ENCODE measurements at regions of chr9 and their contacts with region 1.

Region 1: GRCh38 chr9:2014696-2015580 is at the start of gene SMARCA2:
- DNase-seq: peak; percentile 94 to 99 (median 97)
- ATAC-seq: peak; percentile 77
- H3K4me3 ChIP-seq: peak within 1 kb of the TSS; percentile 84
- H3K4me3 Mint-ChIP-seq: peak within 1 kb of the TSS; percentile 100
- H3K27ac ChIP-seq: peak within 1 kb of the TSS; percentile 87 to 91
- H3K27ac Mint-ChIP-seq: peak within 1 kb of the TSS; percentile 99
- H3K4me1 ChIP-seq: peaks cover 12% of the 10 kb centered on the region
- H3K4me1 Mint-ChIP-seq: peaks cover 38% of the 10 kb centered on the region
- H3K27me3 ChIP-seq: no peaks in the 10 kb centered on the region
- H3K27me3 Mint-ChIP-seq: peaks cover 9% of the 10 kb centered on the region
- CTCF ChIP-seq: no peak
- total RNA-seq, gene SMARCA2: 268 to 272 TPM

Region 2: GRCh38 chr9:1303932-1304331 is 711.0 kb before region 1 on chr9:
- CTCF ChIA-PET with region 1: no interaction called
- POLR2A ChIA-PET with region 1: no interaction called
- intact Hi-C with region 1: no loop called
- DNase-seq: no peak
- ATAC-seq: no peak
- H3K4me3 ChIP-seq: no peak overlapping the region
- H3K4me3 Mint-ChIP-seq: no peak overlapping the region
- H3K27ac ChIP-seq: no peak overlapping the region
- H3K27ac Mint-ChIP-seq: no peak overlapping the region
- H3K4me1 ChIP-seq: no peaks in the 10 kb centered on the region
- H3K4me1 Mint-ChIP-seq: no peaks in the 10 kb centered on the region
- H3K27me3 ChIP-seq: no peaks in the 10 kb centered on the region
- H3K27me3 Mint-ChIP-seq: no peaks in the 10 kb centered on the region
- CTCF ChIP-seq: no peak

Region 3: GRCh38 chr9:2000314-2000713 is 14.6 kb before region 1 on chr9:
- CTCF ChIA-PET with region 1: no interaction called
- POLR2A ChIA-PET with region 1: interaction called, 11 read pairs
- intact Hi-C with region 1: no loop called
- DNase-seq: no peak
- ATAC-seq: no peak
- H3K4me3 ChIP-seq: no peak overlapping the region
- H3K4me3 Mint-ChIP-seq: no peak overlapping the region
- H3K27ac ChIP-seq: no peak overlapping the region
- H3K27ac Mint-ChIP-seq: no peak overlapping the region
- H3K4me1 ChIP-seq: no peaks in the 10 kb centered on the region
- H3K4me1 Mint-ChIP-seq: peaks cover 9% of the 10 kb centered on the region
- H3K27me3 ChIP-seq: no peaks in the 10 kb centered on the region
- H3K27me3 Mint-ChIP-seq: no peaks in the 10 kb centered on the region
- CTCF ChIP-seq: no peak

Region 4: DNA sequence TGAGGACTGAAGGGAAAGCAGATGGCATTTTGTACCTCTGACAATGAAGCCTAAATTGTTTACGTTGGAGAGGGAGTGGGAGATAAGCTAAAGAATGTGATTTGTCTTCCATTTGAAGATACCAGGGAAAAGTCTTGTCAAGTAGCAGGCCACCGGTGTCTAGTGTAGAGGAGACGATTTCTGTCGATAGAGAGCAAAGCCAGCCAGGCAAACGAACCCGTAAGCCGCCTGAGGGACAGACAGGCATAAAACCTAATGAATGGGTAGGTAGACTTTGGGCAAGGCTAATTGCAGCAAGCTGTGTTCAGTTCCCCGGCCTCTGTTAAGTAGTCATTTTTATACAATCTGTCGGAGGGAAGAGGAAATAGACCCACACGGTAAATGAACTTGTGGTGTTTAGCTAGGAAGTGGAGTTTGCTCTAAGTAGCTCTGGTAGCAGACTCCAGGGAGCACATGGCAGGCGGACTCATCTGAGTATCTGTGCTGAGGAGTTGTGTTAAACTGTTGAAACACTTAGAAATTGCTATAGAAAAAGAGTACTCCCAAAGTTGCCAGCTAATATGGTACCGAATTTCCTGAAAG is 29.0 kb after region 1 on chr9:
- CTCF ChIA-PET with region 1: interaction called, 4 read pairs
- POLR2A ChIA-PET with region 1: interaction called, 14 read pairs
- intact Hi-C with region 1: no loop called
- DNase-seq: no peak
- ATAC-seq: peak; percentile 21
- H3K4me3 ChIP-seq: no peak overlapping the region
- H3K4me3 Mint-ChIP-seq: peak overlapping the region; percentile 2
- H3K27ac ChIP-seq: no peak overlapping the region
- H3K27ac Mint-ChIP-seq: peak overlapping the region; percentile 77
- H3K4me1 ChIP-seq: peaks cover 9% of the 10 kb centered on the region
- H3K4me1 Mint-ChIP-seq: peaks cover 64% of the 10 kb centered on the region
- H3K27me3 ChIP-seq: no peaks in the 10 kb centered on the region
- H3K27me3 Mint-ChIP-seq: no peaks in the 10 kb centered on the region
- CTCF ChIP-seq: no peak

Region 5: DNA sequence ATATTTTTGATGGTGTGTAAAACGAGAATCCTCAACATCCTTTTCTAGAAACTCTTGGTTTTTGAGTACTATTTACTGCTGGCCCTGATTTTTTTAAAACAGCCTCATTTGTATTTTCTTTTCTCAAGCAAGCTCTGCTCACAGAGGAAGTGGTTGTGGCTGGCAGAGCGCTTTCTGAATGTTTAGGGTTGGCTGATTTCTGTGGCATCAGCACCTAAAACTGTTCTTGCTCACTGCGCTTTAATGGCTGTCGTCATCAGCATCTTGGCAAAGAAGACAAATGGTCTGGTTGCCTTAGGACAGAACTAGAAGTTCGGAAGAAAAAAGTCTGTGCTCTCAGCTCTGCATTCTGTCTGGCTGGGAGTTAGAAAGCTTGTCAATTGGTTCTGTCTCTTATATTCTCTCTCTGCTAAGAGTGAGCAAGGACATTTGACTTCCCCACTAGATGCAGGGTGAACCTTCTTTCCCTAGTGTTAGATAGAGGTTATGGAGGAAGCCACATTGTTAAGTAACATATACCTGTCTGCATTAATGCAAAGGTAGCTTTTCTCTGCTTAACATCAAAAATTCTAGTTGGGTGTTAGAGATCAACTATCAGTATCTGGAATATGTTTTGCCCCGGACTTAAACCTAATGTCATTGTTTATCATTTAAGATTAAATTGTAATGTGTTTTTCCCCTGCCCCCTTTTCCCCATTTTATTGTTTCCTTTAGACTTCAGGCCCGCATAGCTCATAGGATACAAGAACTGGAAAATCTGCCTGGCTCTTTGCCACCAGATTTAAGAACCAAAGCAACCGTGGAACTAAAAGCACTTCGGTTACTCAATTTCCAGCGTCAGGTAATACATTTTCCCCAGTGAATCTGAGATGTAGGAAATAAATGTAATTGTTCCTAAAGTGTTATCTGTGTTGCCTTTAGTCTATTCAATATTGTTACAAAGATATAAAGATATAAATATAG is 39.2 kb after region 1 on chr9:
- CTCF ChIA-PET with region 1: interaction called, 4 read pairs
- POLR2A ChIA-PET with region 1: interaction called, 113 read pairs
- intact Hi-C with region 1: loop called in 1 of 2 experiments (anchors 1 kb)
- DNase-seq: peak; percentile 53 to 92 (median 59)
- ATAC-seq: peak; percentile 95
- H3K4me3 ChIP-seq: no peak overlapping the region
- H3K4me3 Mint-ChIP-seq: peak overlapping the region; percentile 71
- H3K27ac ChIP-seq: peak overlapping the region; percentile 55 to 73
- H3K27ac Mint-ChIP-seq: peak overlapping the region; percentile 97
- H3K4me1 ChIP-seq: peaks cover 20% of the 10 kb centered on the region
- H3K4me1 Mint-ChIP-seq: peaks cover 77% of the 10 kb centered on the region
- H3K27me3 ChIP-seq: no peaks in the 10 kb centered on the region
- H3K27me3 Mint-ChIP-seq: no peaks in the 10 kb centered on the region
- CTCF ChIP-seq: peak; percentile 14

Region 6: DNA sequence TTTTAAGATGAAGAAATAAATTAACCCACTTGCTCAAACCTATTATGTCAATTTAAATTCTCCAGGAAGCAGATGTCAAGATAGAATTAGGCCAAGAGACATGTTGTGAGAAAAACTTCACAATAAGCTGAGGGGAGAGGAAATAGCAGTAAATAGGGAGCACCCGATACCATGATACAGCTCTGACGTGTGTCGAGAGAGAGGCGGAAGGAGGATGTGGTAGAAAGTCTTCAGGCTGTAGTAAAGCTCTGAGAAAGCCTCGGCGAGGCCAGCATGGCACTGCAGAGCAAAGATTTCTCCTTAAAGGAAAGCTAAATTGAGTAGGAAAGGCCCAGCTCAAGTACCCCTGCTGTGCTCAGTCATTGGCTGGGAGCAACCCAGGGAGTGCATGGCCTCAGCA is 835.0 kb after region 1 on chr9:
- CTCF ChIA-PET with region 1: no interaction called
- POLR2A ChIA-PET with region 1: interaction called, 19 read pairs
- intact Hi-C with region 1: loop called in 1 of 2 experiments (anchors 10 kb)
- DNase-seq: peak in 4 of 14 experiments; percentile 4 to 54 (median 28)
- ATAC-seq: peak; percentile 92
- H3K4me3 ChIP-seq: no peak overlapping the region
- H3K4me3 Mint-ChIP-seq: no peak overlapping the region
- H3K27ac ChIP-seq: no peak overlapping the region
- H3K27ac Mint-ChIP-seq: peak overlapping the region; percentile 8
- H3K4me1 ChIP-seq: peaks cover 7% of the 10 kb centered on the region
- H3K4me1 Mint-ChIP-seq: peaks cover 12% of the 10 kb centered on the region
- H3K27me3 ChIP-seq: no peaks in the 10 kb centered on the region
- H3K27me3 Mint-ChIP-seq: peaks cover 23% of the 10 kb centered on the region
- CTCF ChIP-seq: no peak

Measured in CD4-positive, alpha-beta T cell (primary cell).